ENCODE measurements at regions of chr1 and their contacts with region 1.

Region 1: GRCh38 chr1:228989992-228990827 is 254.9 kb downstream of the RHOU start:
- DNase-seq: peak; percentile 87
- ATAC-seq: peak; percentile 83

Region 2: GRCh38 chr1:228748431-228748830 is 241.8 kb before region 1 on chr1:
- intact Hi-C with region 1: loop called (anchors 10 kb)
- DNase-seq: no peak
- ATAC-seq: no peak